Endothelial cell of umbilical vein (primary cell): ENCODE measurements at regions of chr1 and their contacts with region 1.

Region 1: DNA sequence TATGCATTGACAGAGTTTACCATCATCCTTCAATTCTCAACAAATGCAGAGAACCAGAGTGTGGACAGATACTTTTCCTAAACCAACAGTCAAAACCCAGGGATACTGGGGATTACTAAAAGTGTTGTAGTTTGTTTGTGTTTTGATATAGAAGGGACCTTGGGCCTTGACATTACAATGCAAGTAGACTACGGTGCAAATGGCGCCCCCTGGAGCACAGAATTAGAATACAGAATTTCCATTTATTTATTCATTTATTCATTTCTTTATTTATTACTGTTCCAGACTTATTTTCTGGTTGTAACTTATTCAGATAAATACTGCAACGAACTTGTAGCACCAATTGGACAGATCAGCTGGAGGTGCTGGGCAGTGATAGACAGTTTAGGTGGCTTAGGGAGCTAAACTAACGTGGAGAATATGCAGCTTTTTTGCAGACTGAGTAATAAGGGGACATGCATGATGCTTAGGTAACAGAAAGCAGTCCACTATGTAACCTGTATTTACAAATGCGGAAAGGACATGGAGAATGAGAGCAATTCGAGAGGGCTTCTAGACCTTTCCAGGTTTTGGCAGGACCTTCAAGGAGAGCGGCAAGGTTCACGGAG is 42.6 kb downstream of the KIRREL1 start:
- DNase-seq: peak; percentile 78
- H3K4me3 ChIP-seq: no peak overlapping the region
- H3K27ac ChIP-seq: no peak overlapping the region
- H3K4me1 ChIP-seq: peaks cover 34% of the 10 kb centered on the region
- H3K27me3 ChIP-seq: no peaks in the 10 kb centered on the region
- CTCF ChIP-seq: peak; percentile 59 to 67
- POLR2A ChIP-seq: no peak

Region 2: DNA sequence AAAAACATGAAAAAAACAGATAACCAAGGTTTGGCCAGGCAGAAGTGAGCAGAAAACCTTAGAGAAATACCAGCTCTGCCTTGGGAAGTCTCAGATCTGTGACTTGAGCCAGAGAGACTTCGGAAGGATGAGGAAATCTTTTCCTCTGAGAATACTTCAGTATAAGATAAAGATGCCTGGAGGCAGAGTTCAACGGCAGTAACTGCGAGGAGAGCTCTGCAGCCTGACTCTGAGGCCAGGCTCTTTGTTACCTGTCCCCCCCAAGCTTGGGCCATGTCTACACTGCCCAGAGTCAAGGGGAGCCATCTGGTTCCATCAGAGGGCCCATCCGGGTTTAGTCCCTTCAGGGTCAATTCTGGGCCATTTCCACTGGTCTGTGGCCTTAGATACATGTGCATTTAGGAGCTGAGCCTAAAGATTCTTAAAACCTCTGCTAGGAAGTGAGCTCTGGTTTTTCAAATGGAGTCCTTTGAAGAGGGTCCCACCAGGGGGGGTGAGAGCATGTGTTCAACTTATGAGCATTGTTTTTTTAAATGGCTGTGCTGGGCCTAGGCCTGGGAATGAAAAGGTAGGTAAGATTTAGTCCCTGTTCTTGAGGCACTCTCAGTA is 34.0 kb before region 1 on chr1:
- CTCF ChIA-PET with region 1: interaction called, 264 read pairs
- POLR2A ChIA-PET with region 1: no interaction called
- dilution Hi-C with region 1: no loop called
- intact Hi-C with region 1: no loop called
- DNase-seq: peak; percentile 20
- H3K4me3 ChIP-seq: no peak overlapping the region
- H3K27ac ChIP-seq: no peak overlapping the region
- H3K4me1 ChIP-seq: peaks cover 8% of the 10 kb centered on the region
- H3K27me3 ChIP-seq: no peaks in the 10 kb centered on the region
- CTCF ChIP-seq: no peak
- POLR2A ChIP-seq: no peak

Region 3: GRCh38 chr1:158013840-158014730 is 22.0 kb before region 1 on chr1:
- CTCF ChIA-PET with region 1: interaction called, 24 read pairs
- POLR2A ChIA-PET with region 1: interaction called, 12 read pairs
- dilution Hi-C with region 1: no loop called
- intact Hi-C with region 1: loop called (anchors 2 kb)
- DNase-seq: no peak
- H3K4me3 ChIP-seq: no peak overlapping the region
- H3K27ac ChIP-seq: no peak overlapping the region
- H3K4me1 ChIP-seq: peaks cover 60% of the 10 kb centered on the region
- H3K27me3 ChIP-seq: no peaks in the 10 kb centered on the region
- CTCF ChIP-seq: no peak
- POLR2A ChIP-seq: no peak

Region 4: DNA sequence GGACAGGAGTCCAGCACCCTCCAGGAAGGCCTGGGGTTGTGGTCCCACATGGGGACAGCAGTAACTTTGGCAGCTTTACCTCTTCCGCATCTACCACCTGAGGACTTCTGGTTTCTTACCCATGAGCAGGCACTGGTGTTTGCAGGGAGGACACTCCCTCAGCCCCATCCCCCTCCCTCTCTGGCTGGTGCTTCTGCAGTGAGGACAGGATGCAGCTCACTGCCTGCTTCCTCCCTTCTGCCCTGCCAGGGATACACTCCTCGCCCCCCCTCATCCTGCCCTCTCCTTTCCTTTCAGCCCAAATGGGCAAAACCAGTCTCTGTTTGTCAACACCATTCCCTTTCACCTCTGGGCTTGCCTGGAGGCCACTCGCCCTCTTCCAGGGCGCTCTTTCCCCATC is 19.8 kb after region 1 on chr1:
- CTCF ChIA-PET with region 1: interaction called, 26 read pairs
- POLR2A ChIA-PET with region 1: no interaction called
- dilution Hi-C with region 1: no loop called
- intact Hi-C with region 1: loop called (anchors 1 kb)
- DNase-seq: peak; percentile 85
- H3K4me3 ChIP-seq: no peak overlapping the region
- H3K27ac ChIP-seq: no peak overlapping the region
- H3K4me1 ChIP-seq: peaks cover 19% of the 10 kb centered on the region
- H3K27me3 ChIP-seq: no peaks in the 10 kb centered on the region
- CTCF ChIP-seq: no peak
- POLR2A ChIP-seq: no peak